RWPE1 (cell line): ENCODE measurements at regions of chr10 and their contacts with region 1.

Region 1: DNA sequence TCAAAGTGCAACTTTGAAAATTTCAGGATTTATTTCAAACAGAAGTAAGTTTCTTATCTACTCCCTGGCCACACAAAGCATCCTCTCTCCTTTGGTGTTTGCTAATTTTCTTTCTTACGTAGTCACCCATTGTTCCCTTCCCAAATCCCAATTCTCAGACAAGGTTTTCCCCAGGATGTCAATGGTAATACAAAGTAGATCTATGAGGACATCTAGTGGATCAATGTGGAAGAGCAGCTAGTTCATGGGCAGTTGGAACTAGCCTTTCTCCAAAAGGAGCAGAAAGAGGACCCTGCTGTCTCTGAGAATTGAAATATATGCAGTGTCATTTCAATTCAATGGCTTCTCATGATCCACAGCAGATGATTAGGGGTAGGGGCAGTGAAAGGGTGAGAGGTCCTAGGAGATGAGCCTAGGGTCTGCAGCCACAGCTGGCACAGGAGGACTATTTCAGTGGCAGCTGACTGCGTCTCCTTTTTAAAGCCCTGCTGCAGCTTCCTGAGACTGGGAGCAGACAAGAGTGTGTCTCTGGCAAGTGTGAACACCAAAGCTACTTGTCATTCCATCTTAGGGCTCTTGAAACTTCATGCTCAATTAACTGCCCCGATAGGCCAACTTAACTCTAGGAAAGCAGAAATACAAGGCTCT is 632.6 kb downstream of the KCNMA1 start:
- DNase-seq: peak; percentile 61
- H3K27ac ChIP-seq: no peak overlapping the region
- CTCF ChIP-seq: peak; percentile 83

Region 2: GRCh38 chr10:76858721-76859120 is 146.3 kb before region 1 on chr10:
- CTCF ChIA-PET with region 1: no interaction called
- POLR2A ChIA-PET with region 1: no interaction called
- DNase-seq: no peak
- H3K27ac ChIP-seq: no peak overlapping the region
- CTCF ChIP-seq: no peak

Region 3: GRCh38 chr10:76991621-76992020 is 13.4 kb before region 1 on chr10:
- CTCF ChIA-PET with region 1: interaction called, 11 read pairs
- POLR2A ChIA-PET with region 1: no interaction called
- DNase-seq: no peak
- H3K27ac ChIP-seq: no peak overlapping the region
- CTCF ChIP-seq: no peak